ENCODE measurements at regions of chr1 and their contacts with region 1.

Region 1: DNA sequence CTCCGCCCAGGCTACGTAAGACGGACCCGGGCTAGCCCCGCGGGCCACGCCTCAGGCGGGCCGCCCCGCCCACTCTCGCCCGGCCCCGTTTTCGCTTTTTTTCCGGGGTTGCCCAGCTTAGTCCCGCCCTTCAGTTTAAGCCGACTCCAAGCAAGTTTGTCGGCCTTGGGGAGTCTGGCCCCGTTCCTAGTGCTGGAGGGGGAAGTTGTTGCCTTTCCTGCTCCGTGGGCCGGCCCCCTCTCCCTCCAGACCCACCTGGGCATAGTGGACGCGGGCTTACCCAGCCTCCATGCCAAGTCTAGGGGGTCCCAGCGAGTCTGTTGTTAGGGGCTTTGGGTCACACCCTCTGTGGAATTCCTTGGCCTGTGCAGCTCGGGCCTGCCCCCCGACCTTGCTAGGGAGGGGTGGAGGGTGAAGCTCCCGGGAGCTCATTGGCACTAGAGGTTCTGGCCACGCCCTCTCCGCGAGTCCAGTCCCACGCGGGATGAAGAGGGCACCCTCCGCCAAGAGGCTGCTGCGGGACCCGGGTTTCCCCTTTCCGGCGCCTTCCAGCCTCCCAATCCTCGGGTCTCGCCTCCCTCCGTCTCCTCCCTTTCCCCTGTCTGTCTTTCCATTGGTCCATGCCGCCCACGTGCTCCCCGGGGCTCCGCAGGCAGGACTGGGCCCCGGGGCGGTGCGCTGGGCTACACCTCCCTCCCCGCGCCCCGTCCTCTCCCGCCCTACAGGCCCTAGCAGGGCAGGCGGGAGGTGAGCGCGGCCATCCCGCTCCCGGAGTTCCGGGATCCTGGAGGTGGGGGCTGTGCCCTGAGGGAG is 3.3 kb downstream of the RUSC1 start:
- DNase-seq: peak; percentile 95 to 99
- H3K4me3 ChIP-seq: peak overlapping the region; percentile 60
- CTCF ChIP-seq: no peak
- POLR2A ChIP-seq: no peak

Region 2: DNA sequence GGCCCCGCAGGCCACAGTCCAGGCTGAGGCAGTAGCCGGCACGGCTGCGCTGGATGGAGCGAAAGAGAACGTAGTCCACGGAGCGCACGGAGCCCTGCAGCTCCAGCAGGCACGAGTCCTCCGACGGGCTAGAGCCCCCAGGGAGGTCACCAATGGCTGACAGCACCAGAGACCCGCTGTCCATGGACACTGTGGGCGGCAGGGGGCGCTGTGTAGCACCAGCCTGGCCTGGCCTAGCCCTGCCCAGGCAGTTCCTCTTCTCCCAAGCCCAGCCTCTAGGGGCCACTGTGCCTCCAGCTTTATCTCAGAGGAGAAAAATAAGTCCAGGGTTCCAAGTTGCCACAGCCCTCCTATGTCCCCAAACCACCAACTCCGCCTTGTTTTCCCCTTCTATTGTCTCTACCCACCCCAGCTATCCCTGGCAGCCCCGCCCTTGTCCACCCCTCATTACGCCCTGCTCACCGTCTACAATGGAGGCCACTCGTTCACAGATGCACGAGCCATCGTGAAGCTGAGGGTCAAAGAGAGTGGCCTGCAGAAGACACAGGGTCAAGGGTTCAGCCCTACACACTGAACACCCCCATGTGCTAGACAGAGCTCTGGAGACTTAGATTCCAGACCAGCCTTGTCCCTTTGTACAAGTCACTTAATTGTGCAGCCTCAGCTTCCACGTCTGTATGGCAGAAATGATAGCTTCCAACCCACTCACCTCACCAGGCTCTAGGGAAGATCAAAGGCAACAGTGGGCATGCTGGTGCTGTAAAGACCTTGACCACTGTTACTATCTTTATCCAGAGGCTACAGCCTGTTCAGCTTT is 73.2 kb before region 1 on chr1:
- intact Hi-C with region 1: loop called (anchors 5 kb)
- DNase-seq: peak; percentile 88 to 98
- H3K4me3 ChIP-seq: no peak overlapping the region
- CTCF ChIP-seq: peak in 1 of 3 donors; percentile 99
- POLR2A ChIP-seq: no peak

Region 3: GRCh38 chr1:155277070-155277895 is 46.7 kb before region 1 on chr1 and contains the start of gene HCN3:
- intact Hi-C with region 1: loop called (anchors 5 kb)
- DNase-seq: peak; percentile 97 to 100
- H3K4me3 ChIP-seq: peak within 1 kb of the TSS; percentile 57
- CTCF ChIP-seq: no peak
- POLR2A ChIP-seq: no peak
- total RNA-seq, gene HCN3: 5.4 to 8.5 (median 6.4) TPM

Region 4: DNA sequence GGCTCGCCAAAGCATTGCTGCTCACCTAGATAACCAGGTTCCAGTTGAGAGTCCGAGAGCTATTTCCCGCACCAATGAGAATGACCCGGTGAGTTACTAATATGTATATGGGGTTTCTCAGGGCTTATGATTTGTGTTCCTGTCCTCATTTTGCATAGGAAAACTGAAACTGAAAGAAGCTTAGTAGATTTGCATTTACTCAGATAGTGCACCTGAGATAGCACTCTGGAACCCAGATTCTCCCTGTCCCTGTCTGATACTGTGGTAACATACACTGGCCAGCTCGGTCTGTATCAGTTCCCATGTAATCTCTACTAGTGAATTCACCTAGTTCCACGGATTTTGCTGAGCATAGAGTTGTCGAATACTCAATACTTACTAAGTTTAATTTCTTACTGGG is 393.0 kb after region 1 on chr1:
- intact Hi-C with region 1: no loop called
- DNase-seq: no peak
- H3K4me3 ChIP-seq: no peak overlapping the region
- CTCF ChIP-seq: no peak
- POLR2A ChIP-seq: no peak